ENCODE measurements at regions of chr11 and their contacts with region 1.

Region 1: GRCh38 chr11:57456960-57457642 is 3.2 kb upstream of the RTN4RL2 start:
- DNase-seq: no peak
- H3K4me3 ChIP-seq: peak overlapping the region; percentile 25; the same call in 1 of the 2 replicates
- CTCF ChIP-seq: peak; percentile 98

Region 2: GRCh38 chr11:57294605-57295131 is 162.4 kb before region 1 on chr11:
- CTCF ChIA-PET with region 1: no interaction called
- POLR2A ChIA-PET with region 1: no interaction called
- DNase-seq: no peak
- H3K4me3 ChIP-seq: no peak overlapping the region
- CTCF ChIP-seq: no peak

Region 3: DNA sequence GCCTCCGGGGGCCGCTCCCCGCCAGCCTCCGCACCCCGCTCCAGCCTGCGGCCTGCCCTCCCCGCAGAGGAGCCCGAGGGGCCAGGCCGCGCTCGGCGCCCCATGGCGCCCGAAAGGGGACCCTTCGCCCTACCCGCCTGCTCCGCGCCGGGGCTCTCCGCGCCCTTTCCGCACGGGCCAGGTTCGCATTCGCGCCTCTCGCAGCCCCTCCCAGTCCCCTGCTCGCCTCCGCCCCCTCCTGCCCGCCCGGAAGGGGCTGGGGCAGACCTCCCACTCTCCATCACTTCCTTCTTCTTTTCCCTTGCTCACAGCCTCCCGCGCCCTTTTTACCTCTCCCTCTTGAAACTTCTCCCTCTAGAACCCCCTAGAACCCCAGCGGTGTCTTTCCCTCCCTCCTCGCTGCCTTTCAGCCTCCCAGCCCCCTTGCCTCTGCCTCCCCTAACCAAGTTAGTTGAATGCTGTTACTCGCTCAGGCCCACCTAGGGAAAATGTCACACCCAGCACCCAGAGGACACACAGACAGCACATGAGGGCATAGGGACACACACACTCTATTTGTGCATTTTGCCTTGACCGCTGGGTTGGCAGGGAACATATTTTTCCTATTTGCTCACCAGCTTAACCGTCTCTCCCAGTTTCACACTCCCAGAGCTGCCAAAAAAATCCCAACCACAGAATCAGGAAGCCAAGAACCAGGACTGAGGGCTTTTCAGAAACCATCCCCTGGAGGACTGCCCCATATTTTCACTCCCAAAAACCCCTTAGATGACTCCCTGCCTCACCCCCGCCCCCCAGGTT is 30.0 kb before region 1 on chr11 and contains the start of gene SLC43A3:
- CTCF ChIA-PET with region 1: interaction called, 40 read pairs
- POLR2A ChIA-PET with region 1: no interaction called
- DNase-seq: peak; percentile 66
- H3K4me3 ChIP-seq: peak within 1 kb of the TSS; percentile 55
- CTCF ChIP-seq: no peak

Region 4: DNA sequence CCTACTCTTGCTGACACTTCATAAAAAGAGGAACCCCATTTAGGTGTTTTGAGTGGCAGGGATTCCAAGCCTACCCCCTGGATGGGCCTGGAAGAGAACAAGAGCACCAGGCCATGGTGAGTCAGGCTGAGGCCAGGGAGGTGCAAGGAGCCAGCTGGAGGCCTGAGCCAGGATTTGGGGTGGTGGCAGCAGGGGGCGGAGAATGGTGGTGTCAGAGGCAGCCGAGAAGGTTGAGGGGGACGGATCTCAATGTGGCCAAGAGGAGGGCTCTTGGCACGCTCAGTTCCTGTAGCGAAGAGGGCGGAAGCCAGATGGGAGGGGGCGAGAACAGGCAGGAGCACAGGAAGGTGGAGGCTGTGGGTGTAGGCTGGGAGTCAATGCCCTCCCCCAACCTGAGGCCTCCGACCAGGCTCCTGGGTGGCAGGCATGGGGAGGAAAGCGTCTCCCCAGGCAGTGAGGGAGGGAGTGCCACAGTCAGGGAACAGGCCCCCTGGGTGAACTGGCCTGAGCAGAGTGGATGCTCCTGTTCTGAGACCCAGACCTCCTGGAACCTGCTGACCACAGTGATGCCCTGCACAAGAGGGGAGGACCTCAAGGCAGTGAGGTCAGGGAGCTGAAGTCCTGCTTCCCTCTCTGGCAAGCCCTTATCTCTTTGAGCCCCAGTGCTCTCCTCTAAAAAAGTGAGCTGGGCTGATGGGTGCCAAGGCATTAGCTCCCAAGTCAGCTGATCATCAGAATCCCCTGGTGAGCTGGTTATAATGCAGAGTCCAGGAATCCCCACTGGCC is 17.1 kb after region 1 on chr11:
- CTCF ChIA-PET with region 1: interaction called, 140 read pairs
- POLR2A ChIA-PET with region 1: no interaction called
- DNase-seq: no peak
- H3K4me3 ChIP-seq: no peak overlapping the region
- CTCF ChIP-seq: no peak

Region 5: GRCh38 chr11:57493507-57494503 is 36.7 kb after region 1 on chr11:
- CTCF ChIA-PET with region 1: interaction called, 34 read pairs
- POLR2A ChIA-PET with region 1: no interaction called
- DNase-seq: no peak
- H3K4me3 ChIP-seq: no peak overlapping the region
- CTCF ChIP-seq: peak; percentile 89

Region 6: DNA sequence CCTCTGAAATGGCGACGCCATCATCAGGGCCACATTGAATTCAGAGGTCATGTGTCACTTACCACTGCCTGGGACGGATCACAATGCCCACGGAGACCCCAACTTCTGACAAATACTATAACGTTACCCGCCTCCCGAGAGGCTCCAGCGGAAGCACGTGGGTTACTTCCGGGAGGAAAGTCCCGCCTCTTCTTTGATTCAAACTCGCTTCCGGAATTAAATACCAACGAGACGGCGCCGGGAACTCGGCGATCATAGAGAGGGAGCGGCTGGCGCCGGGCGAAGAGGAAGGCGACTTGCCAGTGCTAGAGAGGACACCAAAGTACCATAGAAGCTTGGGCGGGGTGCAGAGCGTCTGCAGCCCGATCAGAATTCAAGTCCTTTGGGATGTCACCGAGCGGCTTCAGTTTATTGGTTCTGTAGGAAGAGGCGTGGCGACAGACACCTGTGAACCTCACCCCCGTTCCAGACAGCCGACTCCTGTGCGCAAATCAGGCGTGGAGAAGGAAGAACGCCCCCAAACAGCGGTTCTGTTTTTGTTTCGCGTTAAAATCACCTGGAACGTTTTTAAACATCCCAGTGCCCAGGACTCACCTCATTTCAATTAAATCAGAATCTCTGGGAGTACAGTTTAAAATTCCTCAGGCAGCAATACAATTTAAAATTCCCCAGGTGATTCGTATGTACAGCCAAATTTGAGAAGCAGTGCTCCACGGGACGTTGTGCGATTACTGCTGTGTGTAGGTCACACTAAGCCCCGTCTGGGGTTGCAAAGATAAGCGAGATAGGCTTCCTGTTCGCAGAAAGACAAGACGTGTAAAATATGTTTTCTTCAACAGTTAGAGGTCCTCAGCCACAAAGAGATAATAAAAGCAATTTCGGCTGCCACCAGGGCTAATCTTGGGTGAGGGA is 73.8 kb after region 1 on chr11 and contains the start of gene TIMM10:
- CTCF ChIA-PET with region 1: interaction called, 400 read pairs
- POLR2A ChIA-PET with region 1: no interaction called
- DNase-seq: peak; percentile 68
- H3K4me3 ChIP-seq: peak within 1 kb of the TSS; percentile 96
- CTCF ChIP-seq: no peak

Region 7: GRCh38 chr11:57644748-57645688 is 187.9 kb after region 1 on chr11:
- CTCF ChIA-PET with region 1: interaction called, 188 read pairs
- POLR2A ChIA-PET with region 1: no interaction called
- DNase-seq: no peak
- H3K4me3 ChIP-seq: no peak overlapping the region
- CTCF ChIP-seq: peak; percentile 82